ENCODE measurements at regions of chr7 and their contacts with region 1.

Region 1: GRCh38 chr7:73683056-73683964 is at the starts of genes BUD23 and DNAJC30:
- DNase-seq: peak; percentile 77 to 97 (median 88)
- ATAC-seq: peak; percentile 98
- H3K4me3 ChIP-seq: peak within 1 kb of the TSS; percentile 97
- H3K4me3 Mint-ChIP-seq: peak within 1 kb of the TSS; percentile 91 to 98 (median 96)
- H3K27ac ChIP-seq: peak within 1 kb of the TSS; percentile 91
- H3K27ac Mint-ChIP-seq: peak within 1 kb of the TSS; percentile 91 to 97 (median 95)
- H3K4me1 ChIP-seq: peaks cover 17% of the 10 kb centered on the region in 2 donors
- H3K4me1 Mint-ChIP-seq: peaks cover 17 to 62% (median 42%) of the 10 kb centered on the region in 7 donors
- H3K27me3 ChIP-seq: no peaks in the 10 kb centered on the region
- H3K27me3 Mint-ChIP-seq: no peaks in the 10 kb centered on the region
- total RNA-seq, gene BUD23: 50.5 to 107 (median 72.0) TPM
- total RNA-seq, gene DNAJC30: 9.5 to 22.4 (median 13.4) TPM

Region 2: GRCh38 chr7:73703757-73704639 is 20.7 kb after region 1 on chr7:
- CTCF ChIA-PET with region 1: interaction called, 5 read pairs
- POLR2A ChIA-PET with region 1: no interaction called
- intact Hi-C with region 1: loop called in 1 of 2 experiments (anchors 1 kb)
- DNase-seq: peak in 6 of 9 donors; percentile 29 to 54 (median 42)
- ATAC-seq: peak; percentile 63
- H3K4me3 ChIP-seq: no peak overlapping the region
- H3K4me3 Mint-ChIP-seq: peak overlapping the region in 7 of 10 donors; percentile 16 to 53 (median 49)
- H3K27ac ChIP-seq: no peak overlapping the region
- H3K27ac Mint-ChIP-seq: no peak overlapping the region
- H3K4me1 ChIP-seq: no peaks in the 10 kb centered on the region
- H3K4me1 Mint-ChIP-seq: peaks cover 4 to 14% (median 8%) of the 10 kb centered on the region in 7 donors
- H3K27me3 ChIP-seq: no peaks in the 10 kb centered on the region
- H3K27me3 Mint-ChIP-seq: no peaks in the 10 kb centered on the region

Region 3: GRCh38 chr7:73831755-73832651 is 148.7 kb after region 1 on chr7:
- CTCF ChIA-PET with region 1: no interaction called
- POLR2A ChIA-PET with region 1: no interaction called
- intact Hi-C with region 1: no loop called
- DNase-seq: no peak
- ATAC-seq: no peak
- H3K4me3 ChIP-seq: no peak overlapping the region
- H3K4me3 Mint-ChIP-seq: no peak overlapping the region
- H3K27ac ChIP-seq: no peak overlapping the region
- H3K27ac Mint-ChIP-seq: no peak overlapping the region
- H3K4me1 ChIP-seq: peaks cover 8 to 11% of the 10 kb centered on the region in 2 donors
- H3K4me1 Mint-ChIP-seq: peaks cover 15 to 25% (median 20%) of the 10 kb centered on the region in 7 donors
- H3K27me3 ChIP-seq: no peaks in the 10 kb centered on the region
- H3K27me3 Mint-ChIP-seq: peaks cover 0 to 16% (median 12%) of the 10 kb centered on the region in 5 donors

Region 4: GRCh38 chr7:73885975-73886798 is 202.9 kb after region 1 on chr7:
- CTCF ChIA-PET with region 1: no interaction called
- POLR2A ChIA-PET with region 1: no interaction called
- intact Hi-C with region 1: no loop called
- DNase-seq: no peak
- ATAC-seq: peak; percentile 56
- H3K4me3 ChIP-seq: no peak overlapping the region
- H3K4me3 Mint-ChIP-seq: no peak overlapping the region
- H3K27ac ChIP-seq: no peak overlapping the region
- H3K27ac Mint-ChIP-seq: no peak overlapping the region
- H3K4me1 ChIP-seq: no peaks in the 10 kb centered on the region
- H3K4me1 Mint-ChIP-seq: peaks cover 0 to 7% (median 0%) of the 10 kb centered on the region in 7 donors
- H3K27me3 ChIP-seq: no peaks in the 10 kb centered on the region
- H3K27me3 Mint-ChIP-seq: peaks cover 13 to 44% (median 24%) of the 10 kb centered on the region in 5 donors

Measured in naive thymus-derived CD4-positive, alpha-beta T cell (primary cell).